H1 (cell line): ENCODE measurements at regions of chr6 and their contacts with region 1.

Region 1: DNA sequence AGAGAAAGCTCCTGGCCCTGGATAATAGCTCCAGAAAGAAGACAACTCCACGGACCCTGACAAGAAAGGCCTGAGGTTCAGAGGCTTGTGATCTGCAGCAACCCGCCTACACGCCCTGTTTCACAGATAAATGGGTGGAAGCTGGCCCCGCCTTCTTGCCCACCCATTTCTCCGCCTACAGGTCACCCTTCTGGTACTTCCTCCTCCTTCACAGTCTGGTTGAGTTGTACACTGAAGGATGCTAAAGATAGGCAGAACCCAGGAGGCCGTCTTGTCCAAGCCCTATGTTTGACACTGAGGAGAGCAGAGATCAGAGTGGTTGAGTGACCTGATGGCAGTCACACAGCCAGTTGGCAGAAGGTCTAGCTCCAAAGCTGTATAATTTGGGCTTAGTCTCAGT is 34.2 kb upstream of the MDGA1 start:
- DNase-seq: no peak
- H3K4me3 ChIP-seq: no peak overlapping the region
- H3K27ac ChIP-seq: no peak overlapping the region
- H3K4me1 ChIP-seq: no peaks in the 10 kb centered on the region; a peak in 1 of 7 replicates
- H3K27me3 ChIP-seq: no peaks in the 10 kb centered on the region; a peak in 2 of 7 replicates
- CTCF ChIP-seq: no peak
- EP300 ChIP-seq: no peak
- POLR2A ChIP-seq: no peak
- RAD21 ChIP-seq: no peak

Region 2: GRCh38 chr6:37756135-37756534 is 24.2 kb after region 1 on chr6:
- CTCF ChIA-PET with region 1: interaction called, 13 read pairs
- POLR2A ChIA-PET with region 1: no interaction called
- DNase-seq: no peak
- H3K4me3 ChIP-seq: no peak overlapping the region
- H3K27ac ChIP-seq: no peak overlapping the region
- H3K4me1 ChIP-seq: no peaks in the 10 kb centered on the region
- H3K27me3 ChIP-seq: peaks cover 49 to 75% (median 72%) of the 10 kb centered on the region in 4 experiments
- CTCF ChIP-seq: no peak
- EP300 ChIP-seq: no peak
- POLR2A ChIP-seq: no peak
- RAD21 ChIP-seq: no peak